Ovary (tissue), 10 donors: ENCODE measurements at regions of chr9 and their contacts with region 1.

Region 1: DNA sequence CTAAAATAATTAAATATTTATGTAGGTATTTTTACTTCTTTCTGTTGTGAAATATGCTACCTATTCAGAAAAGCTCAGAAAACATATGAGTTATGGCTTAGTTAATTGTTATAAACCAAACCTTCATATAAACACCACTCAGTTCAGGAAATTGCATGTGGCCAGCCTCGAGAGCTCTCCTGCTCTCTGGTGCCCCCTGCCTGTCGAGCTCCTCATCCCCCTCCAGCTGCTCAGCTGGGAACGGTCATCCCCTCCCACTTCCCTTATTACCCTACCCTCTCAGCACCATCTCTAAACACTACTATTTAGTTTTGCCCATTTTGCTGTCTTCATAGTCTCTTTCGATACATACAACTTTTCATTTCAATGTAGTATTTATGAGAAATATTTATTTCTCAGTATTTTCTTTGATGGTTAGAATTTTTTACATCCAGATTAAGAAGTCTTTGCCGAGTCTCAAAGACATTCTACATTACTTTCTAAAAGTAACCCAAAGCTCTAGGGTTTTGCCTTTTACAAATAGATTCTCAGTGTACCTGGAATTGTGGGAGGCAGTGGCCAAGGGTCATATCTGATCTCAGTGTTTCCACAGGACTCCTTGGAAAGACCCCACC is 51.2 kb upstream of the SEMA4D start:
- DNase-seq: peak; percentile 57 to 83 (median 71)
- H3K4me3 ChIP-seq: no peak overlapping the region
- H3K27ac ChIP-seq: no peak overlapping the region
- H3K4me1 ChIP-seq: no peaks in the 10 kb centered on the region
- H3K27me3 ChIP-seq: no peaks in the 10 kb centered on the region
- CTCF ChIP-seq: peak in 2 of 3 donors; percentile 32 to 41
- EP300 ChIP-seq: no peak
- POLR2A ChIP-seq: no peak

Region 2: DNA sequence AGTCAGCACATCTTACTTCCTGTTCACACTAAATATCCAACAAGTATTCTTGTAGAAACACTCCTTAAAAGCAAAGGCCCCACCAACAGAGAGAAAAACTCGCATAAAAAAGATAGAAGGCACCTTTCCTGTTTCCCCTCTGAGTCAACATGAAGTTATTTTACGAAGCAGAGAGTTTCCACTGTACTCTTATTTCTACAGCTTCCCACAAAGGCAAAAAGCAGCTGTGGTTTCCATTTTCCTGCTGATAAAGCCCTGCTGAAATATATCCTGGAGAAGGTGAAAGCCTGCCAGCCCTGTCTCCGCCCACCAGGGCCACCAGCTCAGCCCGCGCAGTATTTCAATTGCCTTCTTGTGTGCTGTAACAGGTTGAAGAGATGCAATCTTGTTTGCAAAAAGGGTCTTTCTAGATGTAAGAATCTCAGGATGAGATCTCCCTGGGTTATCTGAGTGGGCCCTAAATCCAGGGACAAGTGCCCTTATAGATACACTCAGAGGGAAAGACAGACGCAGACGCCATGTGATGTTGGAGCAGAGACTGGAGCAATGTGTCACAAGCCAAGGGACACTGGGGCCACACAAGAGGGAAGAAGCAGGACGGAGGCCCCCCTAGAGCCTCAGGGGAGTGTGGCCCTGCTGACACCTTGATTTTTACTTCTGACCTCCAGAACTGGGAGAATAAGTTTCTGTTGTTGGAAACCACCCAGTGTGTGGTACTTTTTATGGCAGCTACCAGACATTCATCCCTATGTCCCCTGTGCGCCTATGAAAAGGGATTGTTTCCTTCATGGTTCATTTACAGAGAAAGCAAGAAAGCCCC is 71.1 kb before region 1 on chr9:
- intact Hi-C with region 1: loop called in 1 of 4 experiments (anchors 2 kb)
- DNase-seq: peak; percentile 36 to 67 (median 40)
- H3K4me3 ChIP-seq: no peak overlapping the region
- H3K27ac ChIP-seq: no peak overlapping the region
- H3K4me1 ChIP-seq: peaks cover 4% of the 10 kb centered on the region
- H3K27me3 ChIP-seq: no peaks in the 10 kb centered on the region
- CTCF ChIP-seq: no peak
- EP300 ChIP-seq: no peak
- POLR2A ChIP-seq: no peak